ENCODE measurements at regions of chr17 and their contacts with region 1.

Region 1: DNA sequence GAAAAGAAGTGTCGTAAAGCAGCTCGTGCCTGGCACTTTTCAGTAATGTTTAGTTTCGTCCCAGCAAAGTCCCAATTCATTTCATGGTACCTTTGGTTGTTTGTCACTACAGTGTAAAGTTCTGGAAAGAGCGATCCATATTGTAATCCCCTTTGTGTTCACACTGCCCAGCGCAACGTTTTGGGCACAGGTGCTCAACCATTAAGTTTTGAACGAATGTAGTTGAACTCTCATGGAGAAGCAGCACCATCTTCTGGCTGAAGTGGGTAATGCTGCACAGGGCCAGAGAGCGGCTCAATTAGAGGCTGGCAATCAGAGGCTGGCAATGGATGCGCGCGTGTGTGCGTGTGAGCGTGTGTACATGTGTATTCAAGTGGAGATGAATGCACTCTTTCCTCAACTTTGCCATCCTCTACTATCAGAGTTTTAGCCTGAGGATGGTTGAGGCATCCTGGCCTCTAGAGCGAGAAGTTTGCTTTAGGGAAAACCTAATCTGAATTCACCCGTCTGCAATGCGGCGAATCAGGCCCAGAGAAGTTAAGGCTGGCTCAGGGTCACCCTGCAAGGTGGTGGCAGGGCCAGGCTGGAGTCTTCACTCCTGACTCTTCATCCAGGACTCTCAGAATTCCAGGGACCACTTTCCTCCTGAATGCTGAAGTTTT is 29.9 kb downstream of the DYNLL2 start:
- DNase-seq: peak; percentile 79
- ATAC-seq: peak; percentile 93
- H3K4me3 ChIP-seq: no peak overlapping the region
- H3K27ac ChIP-seq: no peak overlapping the region
- H3K4me1 ChIP-seq: peaks cover 0 to 3% of the 10 kb centered on the region in 2 experiments; a peak in 1 of 4 replicates
- H3K27me3 ChIP-seq: peaks cover 12% of the 10 kb centered on the region; the same call in 1 of the 2 replicates
- CTCF ChIP-seq: peak; percentile 95 to 100 (median 99)
- POLR2A ChIP-seq: no peak
- RAD21 ChIP-seq: peak; percentile 100

Region 2: DNA sequence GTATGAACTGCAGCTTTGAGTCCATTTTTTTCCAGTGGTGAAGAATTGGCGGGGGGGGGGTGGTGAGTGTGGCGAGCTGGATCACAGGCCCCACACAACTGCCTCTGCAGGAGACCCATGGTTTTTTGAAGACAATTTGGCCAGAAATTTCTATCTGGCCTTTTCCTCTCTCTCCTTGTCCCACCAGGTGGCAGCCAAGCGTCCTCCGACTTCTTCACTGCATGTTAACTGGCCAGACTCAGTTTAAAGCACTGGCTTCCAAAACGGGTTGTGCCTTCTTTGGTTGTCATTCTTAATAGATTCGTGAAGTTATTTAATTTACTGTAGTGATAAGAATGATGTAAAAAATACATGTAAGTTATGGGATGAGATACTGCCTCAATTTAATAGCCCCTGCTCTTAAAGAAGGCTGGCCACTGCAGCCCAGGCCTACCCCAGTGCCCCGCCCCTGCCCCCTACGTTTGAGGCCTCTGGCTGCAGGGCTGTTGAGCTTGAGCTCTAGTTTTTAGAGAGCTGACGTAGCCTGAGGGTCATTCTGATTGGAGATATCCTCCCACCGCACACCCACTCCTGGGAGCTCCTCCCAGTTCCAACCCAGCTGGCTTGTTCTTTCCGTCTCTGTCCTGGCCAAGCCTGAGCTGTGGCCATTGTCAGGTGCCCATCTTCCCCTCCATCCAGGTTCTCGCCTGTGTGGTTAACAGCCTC is 991.6 kb before region 1 on chr17:
- CTCF ChIA-PET with region 1: no interaction called
- POLR2A ChIA-PET with region 1: no interaction called
- RAD21 ChIA-PET with region 1: no interaction called
- intact Hi-C with region 1: loop called (anchors 1 kb)
- DNase-seq: no peak
- ATAC-seq: peak; percentile 89
- H3K4me3 ChIP-seq: no peak overlapping the region
- H3K27ac ChIP-seq: no peak overlapping the region
- H3K4me1 ChIP-seq: no peaks in the 10 kb centered on the region
- H3K27me3 ChIP-seq: no peaks in the 10 kb centered on the region
- CTCF ChIP-seq: peak; percentile 52 to 83 (median 67); a peak in 5 of 6 replicates
- POLR2A ChIP-seq: no peak
- RAD21 ChIP-seq: peak; percentile 62

Region 3: DNA sequence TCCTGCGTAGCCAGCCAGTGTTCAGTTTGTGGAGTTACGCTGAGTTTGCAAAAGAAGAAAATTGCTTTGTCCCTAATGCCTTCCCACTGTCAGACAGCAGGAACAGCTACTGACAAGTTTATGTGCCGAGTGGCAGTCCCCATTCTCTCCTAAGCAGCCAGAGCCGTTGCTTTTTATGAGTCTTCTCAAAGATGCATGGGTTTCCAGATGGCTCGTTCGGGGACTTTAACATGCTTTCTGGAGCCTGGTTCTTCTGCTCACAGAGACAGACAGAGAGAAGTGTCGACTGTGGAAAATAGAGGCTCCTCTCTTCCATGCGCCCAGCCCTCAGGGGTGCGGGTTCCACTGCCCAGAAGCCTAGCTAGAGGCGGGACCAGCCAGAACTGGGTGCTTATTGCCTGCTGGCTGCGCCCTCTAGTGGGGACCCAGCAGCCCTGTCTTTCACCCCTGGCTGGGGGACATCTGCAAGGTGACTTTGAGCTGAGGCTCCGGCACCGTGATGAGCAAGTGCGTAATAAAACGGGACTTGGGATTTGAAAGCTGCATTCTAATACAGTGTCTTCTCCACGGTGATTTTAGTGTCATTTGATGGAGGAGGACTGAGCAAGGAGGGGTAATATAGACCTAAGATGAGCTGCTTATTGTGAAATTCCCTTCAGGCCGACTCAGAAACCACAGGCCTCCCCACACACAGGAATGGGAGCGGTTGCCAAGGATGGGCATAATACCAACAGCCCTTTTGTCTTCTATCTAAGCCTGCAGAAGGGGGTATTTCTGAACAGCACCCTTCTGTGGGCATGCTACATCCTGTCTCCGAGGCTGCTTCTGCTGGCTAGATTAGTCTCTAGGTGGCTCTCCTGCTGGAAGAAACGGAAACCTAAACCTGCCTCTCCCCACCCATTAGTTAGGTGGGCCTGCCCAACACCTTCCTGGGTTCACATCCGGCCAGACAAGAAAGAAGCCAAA is 441.2 kb before region 1 on chr17:
- CTCF ChIA-PET with region 1: interaction called, 6 read pairs
- POLR2A ChIA-PET with region 1: no interaction called
- RAD21 ChIA-PET with region 1: no interaction called
- intact Hi-C with region 1: loop called (anchors 5 kb)
- DNase-seq: peak; percentile 47
- ATAC-seq: peak; percentile 100
- H3K4me3 ChIP-seq: no peak overlapping the region
- H3K27ac ChIP-seq: no peak overlapping the region
- H3K4me1 ChIP-seq: peaks cover 0 to 3% of the 10 kb centered on the region in 2 experiments; a peak in 1 of 4 replicates
- H3K27me3 ChIP-seq: no peaks in the 10 kb centered on the region
- CTCF ChIP-seq: peak; percentile 93 to 100 (median 100)
- POLR2A ChIP-seq: no peak
- RAD21 ChIP-seq: peak; percentile 95

Region 4: DNA sequence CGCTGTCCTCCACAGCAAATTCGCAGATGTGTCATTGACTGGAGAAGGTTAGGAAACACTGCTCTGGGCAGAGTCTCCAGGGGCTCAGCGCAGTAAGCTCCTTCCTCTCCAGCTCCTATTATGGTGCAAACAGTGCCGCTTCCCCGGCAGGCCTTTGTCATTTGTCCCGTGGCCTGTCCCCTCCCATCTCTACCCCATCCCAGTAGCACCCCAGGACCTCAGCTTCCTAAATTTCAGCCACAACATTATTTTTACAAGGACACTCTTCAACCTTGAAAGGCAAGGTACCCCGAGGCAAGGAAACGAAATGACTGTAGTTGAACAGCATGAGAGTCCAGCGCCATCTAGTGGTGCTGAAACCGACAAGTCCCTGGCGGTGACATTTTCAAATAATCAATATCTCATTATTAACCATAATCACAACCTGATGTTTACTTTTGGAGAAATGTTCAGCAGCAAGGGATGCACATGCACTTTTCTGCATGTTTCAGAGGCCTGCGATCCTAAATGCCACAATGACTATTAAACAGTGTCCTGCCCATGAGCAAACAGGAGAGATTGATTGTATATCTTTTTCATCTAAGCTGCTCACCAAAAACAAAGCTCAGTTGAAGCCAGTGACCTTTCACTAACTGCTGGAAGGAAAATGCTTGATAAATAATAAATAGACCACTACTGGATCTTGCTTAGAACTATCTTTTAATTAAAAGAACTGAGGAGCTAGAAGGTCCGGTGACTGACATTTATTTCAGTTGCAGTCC is 279.7 kb before region 1 on chr17:
- CTCF ChIA-PET with region 1: interaction called, 6 read pairs
- POLR2A ChIA-PET with region 1: no interaction called
- RAD21 ChIA-PET with region 1: no interaction called
- intact Hi-C with region 1: loop called (anchors 1 kb)
- DNase-seq: peak; percentile 69
- ATAC-seq: peak; percentile 77
- H3K4me3 ChIP-seq: no peak overlapping the region
- H3K27ac ChIP-seq: no peak overlapping the region
- H3K4me1 ChIP-seq: peaks cover 0 to 15% of the 10 kb centered on the region in 2 experiments; a peak in 2 of 4 replicates
- H3K27me3 ChIP-seq: no peaks in the 10 kb centered on the region
- CTCF ChIP-seq: peak; percentile 86 to 100 (median 97)
- POLR2A ChIP-seq: no peak
- RAD21 ChIP-seq: peak; percentile 88

Region 5: GRCh38 chr17:57861000-57861789 is 251.9 kb before region 1 on chr17:
- CTCF ChIA-PET with region 1: interaction called, 7 read pairs
- POLR2A ChIA-PET with region 1: no interaction called
- RAD21 ChIA-PET with region 1: interaction called in 1 of 2 experiments, 8 read pairs
- intact Hi-C with region 1: loop called (anchors 1 kb)
- DNase-seq: peak; percentile 75
- ATAC-seq: peak; percentile 68
- H3K4me3 ChIP-seq: peak overlapping the region; percentile 38 to 51
- H3K27ac ChIP-seq: peak overlapping the region; percentile 79
- H3K4me1 ChIP-seq: peaks cover 54 to 80% of the 10 kb centered on the region in 2 experiments
- H3K27me3 ChIP-seq: no peaks in the 10 kb centered on the region
- CTCF ChIP-seq: 0 out of 6 replicates have a peak, but pooled peaks of 1 of the 3 experiments have one; percentile 5
- POLR2A ChIP-seq: no peak
- RAD21 ChIP-seq: no peak

Region 6: GRCh38 chr17:58032691-58033415 is 80.2 kb before region 1 on chr17:
- CTCF ChIA-PET with region 1: no interaction called
- POLR2A ChIA-PET with region 1: no interaction called
- RAD21 ChIA-PET with region 1: no interaction called
- intact Hi-C with region 1: no loop called
- DNase-seq: no peak
- ATAC-seq: no peak
- H3K4me3 ChIP-seq: no peak overlapping the region
- H3K27ac ChIP-seq: no peak overlapping the region
- H3K4me1 ChIP-seq: peaks cover 0 to 4% of the 10 kb centered on the region in 2 experiments; a peak in 1 of 4 replicates
- H3K27me3 ChIP-seq: no peaks in the 10 kb centered on the region
- CTCF ChIP-seq: no peak
- POLR2A ChIP-seq: no peak
- RAD21 ChIP-seq: no peak

Region 7: DNA sequence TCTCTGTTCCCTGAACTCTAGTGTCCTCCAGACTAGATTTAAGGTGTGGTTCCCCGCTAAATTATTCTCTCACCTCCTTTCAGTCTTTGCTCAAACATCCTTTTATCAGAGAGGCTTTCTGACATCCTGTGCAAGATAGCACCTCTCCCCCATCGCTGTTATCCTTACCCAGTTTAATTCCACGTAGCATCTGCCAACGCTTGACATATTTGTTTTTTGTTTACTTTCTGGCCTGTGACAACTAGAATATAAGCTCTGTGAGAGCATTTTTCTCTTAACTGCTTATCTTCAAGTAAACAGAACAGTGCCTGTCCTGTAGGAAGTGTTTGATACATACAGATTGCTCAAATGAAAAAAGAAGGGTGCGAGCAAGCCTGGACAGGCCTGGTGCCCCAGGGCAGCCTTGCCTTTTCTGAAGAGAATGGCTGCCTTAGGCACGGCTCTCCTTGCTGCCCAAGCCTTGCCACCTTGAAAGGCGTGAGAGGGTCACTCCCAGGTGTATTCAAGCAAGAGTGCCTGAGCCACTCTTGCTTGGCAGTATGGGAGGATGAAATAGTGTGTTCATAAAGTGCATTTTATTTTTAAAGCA is 20.2 kb before region 1 on chr17:
- CTCF ChIA-PET with region 1: no interaction called
- POLR2A ChIA-PET with region 1: no interaction called
- RAD21 ChIA-PET with region 1: no interaction called
- intact Hi-C with region 1: no loop called
- DNase-seq: no peak
- ATAC-seq: no peak
- H3K4me3 ChIP-seq: no peak overlapping the region
- H3K27ac ChIP-seq: no peak overlapping the region
- H3K4me1 ChIP-seq: no peaks in the 10 kb centered on the region
- H3K27me3 ChIP-seq: no peaks in the 10 kb centered on the region
- CTCF ChIP-seq: no peak
- POLR2A ChIP-seq: no peak
- RAD21 ChIP-seq: no peak

Region 8: DNA sequence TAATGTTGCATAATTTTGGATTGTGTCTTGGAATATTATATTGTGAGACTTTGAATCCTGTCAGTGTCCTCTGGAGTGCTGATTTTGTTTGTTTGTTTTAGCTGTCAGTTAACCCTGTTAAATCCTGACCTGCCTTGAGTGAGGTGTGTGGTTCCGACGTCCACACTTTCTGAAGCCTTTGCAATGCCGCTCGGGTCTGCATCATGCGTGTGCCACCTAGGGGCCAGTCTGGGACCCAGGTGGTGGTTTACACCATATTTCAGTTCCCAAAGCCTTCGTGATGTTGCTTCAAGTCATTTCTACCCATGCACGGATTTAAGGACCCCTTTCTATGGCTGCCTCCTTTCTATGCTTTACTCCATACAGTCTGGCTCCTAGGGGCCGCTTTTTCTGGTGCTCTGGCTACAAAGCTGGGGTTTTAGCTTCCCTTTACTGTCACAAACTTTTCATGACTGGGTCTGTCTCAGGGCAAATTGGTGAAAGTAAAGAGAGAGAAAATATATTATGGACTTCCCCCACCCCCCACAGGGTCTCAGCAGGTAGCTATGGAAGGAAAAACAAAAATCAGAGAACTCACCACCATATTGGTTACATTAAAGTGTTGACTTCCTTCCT is 23.7 kb after region 1 on chr17:
- CTCF ChIA-PET with region 1: no interaction called
- POLR2A ChIA-PET with region 1: no interaction called
- RAD21 ChIA-PET with region 1: no interaction called
- intact Hi-C with region 1: no loop called
- DNase-seq: peak; percentile 54
- ATAC-seq: peak; percentile 100
- H3K4me3 ChIP-seq: no peak overlapping the region
- H3K27ac ChIP-seq: no peak overlapping the region
- H3K4me1 ChIP-seq: peaks cover 0 to 6% of the 10 kb centered on the region in 2 experiments; a peak in 1 of 4 replicates
- H3K27me3 ChIP-seq: peaks cover 60% of the 10 kb centered on the region
- CTCF ChIP-seq: peak; percentile 50 to 94 (median 90); a peak in 5 of 6 replicates
- POLR2A ChIP-seq: no peak
- RAD21 ChIP-seq: peak; percentile 73